ENCODE measurements at regions of chr1 and their contacts with region 1.

Region 1: GRCh38 chr1:164803366-164803765 is 244.4 kb downstream of the PBX1 start:
- DNase-seq: no peak
- ATAC-seq: no peak
- H3K4me3 ChIP-seq: no peak overlapping the region
- H3K27ac ChIP-seq: peak overlapping the region; percentile 73
- H3K4me1 ChIP-seq: peaks cover 56% of the 10 kb centered on the region
- H3K27me3 ChIP-seq: no peaks in the 10 kb centered on the region
- CTCF ChIP-seq: no peak

Region 2: GRCh38 chr1:164576291-164577271 is 226.8 kb before region 1 on chr1:
- intact Hi-C with region 1: no loop called
- DNase-seq: peak; percentile 39 to 55
- ATAC-seq: peak; percentile 27 to 54 (median 50)
- H3K4me3 ChIP-seq: peak overlapping the region; percentile 50
- H3K27ac ChIP-seq: peak overlapping the region; percentile 62
- H3K4me1 ChIP-seq: peaks cover 33% of the 10 kb centered on the region
- H3K27me3 ChIP-seq: no peaks in the 10 kb centered on the region
- CTCF ChIP-seq: no peak

Region 3: DNA sequence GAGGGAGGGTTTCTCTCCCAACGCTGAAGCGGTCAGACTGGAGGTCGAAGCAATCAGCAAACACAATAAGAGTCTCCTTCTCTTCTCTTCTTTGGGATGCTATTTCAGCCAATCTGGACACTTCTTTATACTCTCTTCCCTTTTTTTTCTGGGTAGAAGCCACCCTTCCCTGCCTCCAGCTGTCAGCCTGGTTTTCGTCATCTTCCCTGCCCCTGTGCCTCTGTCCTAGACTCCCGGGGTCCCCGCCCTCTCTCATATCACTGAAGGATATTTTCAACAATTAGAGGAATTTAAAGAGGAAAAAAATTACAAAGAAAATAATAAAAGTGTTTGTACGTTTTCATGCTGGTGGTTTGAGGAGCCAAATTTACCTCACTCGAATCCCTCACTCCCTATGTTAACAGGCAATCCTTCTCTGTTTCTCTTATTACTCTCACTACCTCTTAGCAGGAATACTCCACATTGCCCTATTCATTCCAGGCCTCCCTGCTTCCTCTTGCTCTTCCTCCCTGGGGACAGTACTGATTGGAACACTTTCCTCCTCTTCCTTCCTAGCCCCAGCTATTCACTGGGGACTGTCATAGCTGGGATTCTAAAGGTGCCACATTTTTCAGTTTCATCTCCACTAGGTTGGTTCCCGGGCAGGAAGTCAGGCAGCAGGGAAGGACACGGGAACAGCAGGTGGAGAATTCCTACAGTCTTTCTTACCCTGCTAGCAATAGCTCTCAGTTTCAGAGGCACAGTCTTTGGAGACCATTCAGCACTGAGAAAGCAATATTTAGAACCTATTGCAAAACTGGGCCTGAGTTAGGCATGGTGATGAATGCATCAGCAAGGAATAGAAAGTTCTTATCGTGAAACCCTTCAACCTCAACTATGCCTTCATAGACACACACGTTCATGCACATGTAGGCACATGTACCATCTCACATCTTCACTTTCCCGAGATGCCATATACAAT is 43.6 kb after region 1 on chr1:
- intact Hi-C with region 1: loop called in 1 of 2 experiments (anchors 5 kb)
- DNase-seq: no peak
- ATAC-seq: peak; percentile 42 to 94 (median 92)
- H3K4me3 ChIP-seq: no peak overlapping the region
- H3K27ac ChIP-seq: peak overlapping the region; percentile 80
- H3K4me1 ChIP-seq: peaks cover 21% of the 10 kb centered on the region
- H3K27me3 ChIP-seq: no peaks in the 10 kb centered on the region
- CTCF ChIP-seq: no peak

Measured in psoas muscle (tissue), 8 donors.